Naive thymus-derived CD4-positive, alpha-beta T cell (primary cell): ENCODE measurements at regions of chr2 and their contacts with region 1.

Region 1: GRCh38 chr2:55050133-55050994 is at the start of gene RTN4:
- DNase-seq: peak; percentile 89 to 99 (median 97)
- ATAC-seq: peak; percentile 94
- H3K4me3 ChIP-seq: peak within 1 kb of the TSS; percentile 93
- H3K4me3 Mint-ChIP-seq: peak within 1 kb of the TSS; percentile 97 to 100 (median 100)
- H3K27ac ChIP-seq: peak within 1 kb of the TSS; percentile 81
- H3K27ac Mint-ChIP-seq: peak within 1 kb of the TSS; percentile 97 to 100 (median 100)
- H3K4me1 ChIP-seq: peaks cover 31 to 38% of the 10 kb centered on the region in 2 donors
- H3K4me1 Mint-ChIP-seq: peaks cover 40 to 82% (median 68%) of the 10 kb centered on the region in 7 donors
- H3K27me3 ChIP-seq: no peaks in the 10 kb centered on the region
- H3K27me3 Mint-ChIP-seq: no peaks in the 10 kb centered on the region
- total RNA-seq, gene RTN4: 59.6 to 100 (median 65.1) TPM

Region 2: GRCh38 chr2:53786705-53787612 is 1263.4 kb before region 1 on chr2 and contains the starts of genes ASB3 and ERLEC1:
- CTCF ChIA-PET with region 1: no interaction called
- POLR2A ChIA-PET with region 1: no interaction called
- intact Hi-C with region 1: loop called (anchors 1 to 10 kb)
- DNase-seq: peak; percentile 69 to 87 (median 83)
- ATAC-seq: peak; percentile 95
- H3K4me3 ChIP-seq: peak within 1 kb of the TSS; percentile 66
- H3K4me3 Mint-ChIP-seq: peak within 1 kb of the TSS; percentile 88 to 99 (median 98)
- H3K27ac ChIP-seq: peak within 1 kb of the TSS; percentile 82
- H3K27ac Mint-ChIP-seq: peak within 1 kb of the TSS; percentile 81 to 99 (median 96)
- H3K4me1 ChIP-seq: peaks cover 14 to 16% of the 10 kb centered on the region in 2 donors
- H3K4me1 Mint-ChIP-seq: peaks cover 37 to 79% (median 67%) of the 10 kb centered on the region in 7 donors
- H3K27me3 ChIP-seq: no peaks in the 10 kb centered on the region
- H3K27me3 Mint-ChIP-seq: no peaks in the 10 kb centered on the region
- total RNA-seq, gene ASB3: 24.9 to 43.2 (median 34.5) TPM
- total RNA-seq, gene ERLEC1: 13.3 to 30.1 (median 26.3) TPM

Region 3: GRCh38 chr2:54579684-54580620 is 470.4 kb before region 1 on chr2:
- CTCF ChIA-PET with region 1: no interaction called
- POLR2A ChIA-PET with region 1: no interaction called
- intact Hi-C with region 1: loop called in 1 of 2 experiments (anchors 10 kb)
- DNase-seq: peak in 7 of 9 donors; percentile 56 to 83 (median 78)
- ATAC-seq: peak; percentile 88
- H3K4me3 ChIP-seq: peak overlapping the region; percentile 20
- H3K4me3 Mint-ChIP-seq: peak overlapping the region; percentile 70 to 93 (median 76)
- H3K27ac ChIP-seq: peak overlapping the region; percentile 95
- H3K27ac Mint-ChIP-seq: peak overlapping the region; percentile 85 to 98 (median 96)
- H3K4me1 ChIP-seq: peaks cover 82 to 92% of the 10 kb centered on the region in 2 donors
- H3K4me1 Mint-ChIP-seq: peaks cover 74 to 99% (median 95%) of the 10 kb centered on the region in 7 donors
- H3K27me3 ChIP-seq: no peaks in the 10 kb centered on the region
- H3K27me3 Mint-ChIP-seq: no peaks in the 10 kb centered on the region

Region 4: GRCh38 chr2:55014962-55015939 is 35.1 kb before region 1 on chr2:
- CTCF ChIA-PET with region 1: interaction called, 4 read pairs
- POLR2A ChIA-PET with region 1: interaction called, 6 read pairs
- intact Hi-C with region 1: loop called (anchors 1 to 2 kb)
- DNase-seq: peak in 7 of 9 donors; percentile 13 to 56 (median 41)
- ATAC-seq: peak; percentile 60
- H3K4me3 ChIP-seq: no peak overlapping the region
- H3K4me3 Mint-ChIP-seq: no peak overlapping the region
- H3K27ac ChIP-seq: no peak overlapping the region
- H3K27ac Mint-ChIP-seq: peak overlapping the region in 3 of 9 donors; percentile 0 to 47 (median 14)
- H3K4me1 ChIP-seq: peaks cover 9 to 10% of the 10 kb centered on the region in 2 donors
- H3K4me1 Mint-ChIP-seq: peaks cover 19 to 66% (median 41%) of the 10 kb centered on the region in 7 donors
- H3K27me3 ChIP-seq: no peaks in the 10 kb centered on the region
- H3K27me3 Mint-ChIP-seq: no peaks in the 10 kb centered on the region

Region 5: DNA sequence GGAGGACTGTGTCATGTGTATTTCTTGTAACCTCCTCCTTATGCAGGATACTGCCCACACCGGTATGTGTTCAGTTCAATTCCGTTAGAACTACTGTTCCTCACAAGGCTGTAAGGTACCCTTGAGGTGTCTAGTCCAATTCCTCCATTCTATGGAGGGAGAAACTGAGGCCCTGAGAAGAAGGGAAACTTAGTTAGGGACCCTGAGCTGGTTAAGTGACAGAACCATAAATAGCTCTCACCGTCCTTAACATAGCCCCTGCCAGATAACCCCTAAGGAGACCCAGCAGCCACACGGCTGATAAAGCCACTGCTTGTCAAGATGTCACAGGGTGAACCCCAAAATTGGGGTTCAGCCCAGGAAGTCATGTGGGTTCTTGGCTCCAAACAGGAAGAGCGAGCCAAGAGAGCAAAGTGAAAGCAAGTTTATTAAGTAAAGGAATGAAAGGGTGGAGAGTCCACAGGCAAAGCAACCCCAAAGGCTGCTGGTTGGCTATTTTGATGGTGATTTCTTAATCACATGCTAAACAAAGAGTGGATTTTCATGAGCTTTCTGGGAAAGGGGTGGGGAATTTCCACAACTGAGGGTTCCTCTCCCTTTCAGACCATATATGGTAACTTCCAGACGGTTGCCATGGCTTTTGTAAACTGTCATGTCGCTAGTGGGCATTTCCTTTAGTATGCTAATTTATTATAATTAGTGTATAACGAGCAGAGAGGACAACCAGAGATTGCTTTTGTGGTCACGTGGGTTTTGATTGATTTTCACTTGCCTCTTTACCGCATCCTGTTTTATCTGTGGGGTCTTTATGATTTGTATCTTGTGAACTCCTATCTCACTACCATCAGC is 83.3 kb after region 1 on chr2:
- CTCF ChIA-PET with region 1: interaction called, 6 read pairs
- POLR2A ChIA-PET with region 1: interaction called, 35 read pairs
- intact Hi-C with region 1: loop called (anchors 1 kb)
- DNase-seq: peak; percentile 17 to 78 (median 52)
- ATAC-seq: peak; percentile 91
- H3K4me3 ChIP-seq: peak overlapping the region; percentile 55
- H3K4me3 Mint-ChIP-seq: peak overlapping the region; percentile 83 to 94 (median 88)
- H3K27ac ChIP-seq: peak overlapping the region; percentile 76
- H3K27ac Mint-ChIP-seq: peak overlapping the region; percentile 91 to 98 (median 97)
- H3K4me1 ChIP-seq: peaks cover 14 to 22% of the 10 kb centered on the region in 2 donors
- H3K4me1 Mint-ChIP-seq: peaks cover 19 to 49% (median 39%) of the 10 kb centered on the region in 7 donors
- H3K27me3 ChIP-seq: no peaks in the 10 kb centered on the region
- H3K27me3 Mint-ChIP-seq: no peaks in the 10 kb centered on the region

Region 6: DNA sequence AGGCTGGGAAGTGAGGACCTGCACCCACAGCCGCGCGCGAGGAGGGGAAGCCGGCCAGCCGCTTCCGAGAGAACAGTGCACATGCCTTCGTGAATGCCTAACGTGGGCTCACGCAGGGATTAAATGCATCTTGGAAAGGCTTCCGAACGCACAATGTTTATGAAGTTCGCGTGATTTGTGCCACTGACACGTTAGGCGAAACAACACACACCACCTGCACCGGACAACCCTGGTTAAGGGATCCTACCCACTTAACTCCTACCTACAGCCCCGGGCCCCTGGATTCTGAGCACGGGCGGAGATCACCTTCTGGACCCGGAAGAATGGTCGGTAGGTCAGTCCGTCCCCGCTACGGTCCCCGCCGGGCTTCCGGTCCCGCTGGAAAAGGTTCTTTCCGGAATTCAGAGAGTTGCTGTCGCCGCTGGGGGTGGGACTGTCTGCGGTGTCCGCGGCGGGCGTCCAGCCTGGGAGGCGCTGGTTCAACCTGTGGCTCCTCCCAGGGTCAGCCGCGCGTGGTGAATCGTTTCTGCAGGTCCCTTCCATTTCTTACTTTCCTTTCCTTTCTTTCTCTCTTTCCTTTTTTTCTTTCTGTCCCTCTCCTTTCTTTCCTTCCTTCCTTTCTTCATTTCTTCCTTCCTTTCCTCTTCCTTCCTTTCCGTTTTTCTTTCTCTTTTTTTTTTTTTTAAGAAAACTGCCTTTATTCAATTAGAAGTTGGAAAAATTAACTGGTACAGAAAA is 218.7 kb after region 1 on chr2 and contains the start of gene MTIF2:
- CTCF ChIA-PET with region 1: no interaction called
- POLR2A ChIA-PET with region 1: no interaction called
- intact Hi-C with region 1: loop called in 1 of 2 experiments (anchors 1 kb)
- DNase-seq: peak; percentile 64 to 90 (median 75)
- ATAC-seq: peak; percentile 97
- H3K4me3 ChIP-seq: peak within 1 kb of the TSS; percentile 84
- H3K4me3 Mint-ChIP-seq: peak within 1 kb of the TSS; percentile 78 to 97 (median 94)
- H3K27ac ChIP-seq: peak within 1 kb of the TSS; percentile 79
- H3K27ac Mint-ChIP-seq: peak within 1 kb of the TSS; percentile 94 to 97 (median 96)
- H3K4me1 ChIP-seq: peaks cover 13 to 16% of the 10 kb centered on the region in 2 donors
- H3K4me1 Mint-ChIP-seq: peaks cover 15 to 35% (median 27%) of the 10 kb centered on the region in 7 donors
- H3K27me3 ChIP-seq: no peaks in the 10 kb centered on the region
- H3K27me3 Mint-ChIP-seq: peaks cover 0 to 5% (median 0%) of the 10 kb centered on the region in 5 donors
- total RNA-seq, gene MTIF2: 23.0 to 35.5 (median 28.0) TPM

Region 7: DNA sequence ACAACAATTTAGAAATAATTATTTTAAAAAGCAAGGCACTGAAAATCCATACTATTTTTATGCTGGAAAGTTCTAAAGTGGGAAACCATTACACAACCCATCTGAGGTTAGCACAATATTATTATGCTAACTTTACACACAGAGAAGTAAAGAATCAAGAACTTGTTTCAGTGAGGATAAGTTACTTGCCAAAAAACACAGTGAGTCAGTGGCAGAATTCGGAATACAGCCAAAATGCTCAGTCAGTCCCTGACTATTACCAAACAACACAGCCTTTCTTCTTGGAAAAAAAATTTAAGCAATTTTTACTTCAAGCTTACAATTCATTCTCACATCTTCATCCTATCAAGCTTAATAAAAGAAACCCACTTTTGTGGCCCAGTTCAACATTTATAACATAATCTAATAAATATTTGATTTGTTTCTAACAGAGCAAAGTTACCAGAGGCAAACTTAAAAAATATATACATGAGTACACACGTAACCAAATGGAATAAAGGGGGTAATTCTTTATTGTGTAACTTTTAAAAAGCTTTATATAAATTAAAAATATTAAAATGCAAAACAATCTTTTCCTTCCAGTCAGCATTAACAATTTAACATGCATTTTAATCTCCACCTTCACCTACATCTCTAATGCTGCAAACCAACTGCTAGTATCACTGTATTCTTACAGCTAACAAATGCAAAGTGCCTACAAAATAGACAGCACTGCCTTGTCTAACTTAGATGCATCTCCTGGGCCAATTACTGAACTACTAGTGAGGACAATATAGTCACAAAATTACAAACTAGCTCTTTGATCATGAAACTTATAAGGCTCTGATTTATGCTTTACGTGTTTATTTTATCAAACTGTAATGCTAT is 314.1 kb after region 1 on chr2:
- CTCF ChIA-PET with region 1: no interaction called
- POLR2A ChIA-PET with region 1: no interaction called
- intact Hi-C with region 1: no loop called
- DNase-seq: no peak
- ATAC-seq: no peak
- H3K4me3 ChIP-seq: no peak overlapping the region
- H3K4me3 Mint-ChIP-seq: no peak overlapping the region
- H3K27ac ChIP-seq: no peak overlapping the region
- H3K27ac Mint-ChIP-seq: no peak overlapping the region
- H3K4me1 ChIP-seq: no peaks in the 10 kb centered on the region
- H3K4me1 Mint-ChIP-seq: peaks cover 0 to 1% (median 0%) of the 10 kb centered on the region in 7 donors
- H3K27me3 ChIP-seq: no peaks in the 10 kb centered on the region
- H3K27me3 Mint-ChIP-seq: peaks cover 0 to 1% (median 0%) of the 10 kb centered on the region in 5 donors

Region 8: GRCh38 chr2:55403256-55403998 is 353.1 kb after region 1 on chr2:
- CTCF ChIA-PET with region 1: no interaction called
- POLR2A ChIA-PET with region 1: no interaction called
- intact Hi-C with region 1: no loop called
- DNase-seq: no peak
- ATAC-seq: no peak
- H3K4me3 ChIP-seq: no peak overlapping the region
- H3K4me3 Mint-ChIP-seq: no peak overlapping the region
- H3K27ac ChIP-seq: no peak overlapping the region
- H3K27ac Mint-ChIP-seq: no peak overlapping the region
- H3K4me1 ChIP-seq: no peaks in the 10 kb centered on the region
- H3K4me1 Mint-ChIP-seq: peaks cover 0 to 3% (median 0%) of the 10 kb centered on the region in 7 donors
- H3K27me3 ChIP-seq: no peaks in the 10 kb centered on the region
- H3K27me3 Mint-ChIP-seq: no peaks in the 10 kb centered on the region

Region 9: GRCh38 chr2:55617175-55618024 is 567.0 kb after region 1 on chr2 and contains the start of gene PPP4R3B:
- CTCF ChIA-PET with region 1: no interaction called
- POLR2A ChIA-PET with region 1: interaction called, 10 read pairs
- intact Hi-C with region 1: loop called (anchors 1 kb)
- DNase-seq: peak; percentile 94 to 100 (median 99)
- ATAC-seq: peak; percentile 94
- H3K4me3 ChIP-seq: peak within 1 kb of the TSS; percentile 83
- H3K4me3 Mint-ChIP-seq: no peak within 1 kb of the TSS
- H3K27ac ChIP-seq: peak within 1 kb of the TSS; percentile 99
- H3K27ac Mint-ChIP-seq: no peak within 1 kb of the TSS
- H3K4me1 ChIP-seq: peaks cover 33 to 46% of the 10 kb centered on the region in 2 donors
- H3K4me1 Mint-ChIP-seq: peaks cover 23 to 67% (median 30%) of the 10 kb centered on the region in 7 donors
- H3K27me3 ChIP-seq: no peaks in the 10 kb centered on the region
- H3K27me3 Mint-ChIP-seq: no peaks in the 10 kb centered on the region
- total RNA-seq, gene PPP4R3B: 67.2 to 113 (median 88.0) TPM